CD8-positive, alpha-beta T cell (primary cell): ENCODE measurements at regions of chr12 and their contacts with region 1.

Region 1: DNA sequence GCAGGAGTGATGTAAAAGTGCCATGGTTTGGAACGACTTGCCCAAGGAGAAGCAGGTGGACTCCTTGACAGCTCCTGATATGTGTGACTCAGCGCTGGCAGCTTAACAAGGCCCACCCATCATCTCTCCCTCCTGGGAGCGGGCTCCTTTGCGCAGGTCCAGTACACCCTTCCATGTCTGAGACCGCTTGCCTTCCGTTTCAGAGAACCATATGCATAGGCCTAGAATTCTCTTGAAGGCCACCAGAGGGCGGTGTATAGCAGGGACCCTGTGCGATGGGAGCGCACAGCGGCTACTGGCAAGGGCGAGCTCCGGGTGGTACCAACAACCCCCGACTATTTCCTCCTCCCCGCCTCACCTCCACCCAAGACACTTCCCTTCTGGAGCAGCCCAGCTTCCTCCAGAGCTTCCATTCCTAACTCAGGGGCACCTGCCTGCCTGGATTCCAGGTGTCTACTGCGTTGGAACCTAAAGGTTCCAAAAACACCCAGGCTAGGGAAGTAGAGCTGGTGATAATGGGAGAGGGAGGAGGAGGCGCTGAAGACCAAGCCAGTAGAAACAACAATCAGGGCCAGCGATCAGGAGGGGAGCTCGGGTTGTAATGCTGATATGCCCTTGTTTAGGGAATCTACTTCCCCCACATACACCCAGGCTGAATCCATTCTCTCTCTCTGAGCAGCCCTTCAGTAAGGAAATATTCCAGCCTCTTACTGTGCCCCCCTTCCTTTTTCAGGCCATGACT is 6.2 kb downstream of the DHH start:
- DNase-seq: peak; percentile 19 to 89 (median 70)
- ATAC-seq: peak; percentile 88
- H3K4me3 ChIP-seq: no peak overlapping the region
- H3K4me3 Mint-ChIP-seq: no peak overlapping the region
- H3K27ac ChIP-seq: no peak overlapping the region
- H3K27ac Mint-ChIP-seq: no peak overlapping the region
- H3K4me1 ChIP-seq: peaks cover 45% of the 10 kb centered on the region
- H3K4me1 Mint-ChIP-seq: peaks cover 36% of the 10 kb centered on the region
- H3K27me3 ChIP-seq: peaks cover 45 to 47% of the 10 kb centered on the region in 2 experiments
- H3K27me3 Mint-ChIP-seq: peaks cover 44% of the 10 kb centered on the region
- CTCF ChIP-seq: peak; percentile 79

Region 2: GRCh38 chr12:48861111-48861510 is 227.2 kb before region 1 on chr12:
- CTCF ChIA-PET with region 1: no interaction called
- POLR2A ChIA-PET with region 1: no interaction called
- intact Hi-C with region 1: no loop called
- DNase-seq: no peak
- ATAC-seq: no peak
- H3K4me3 ChIP-seq: no peak overlapping the region
- H3K4me3 Mint-ChIP-seq: no peak overlapping the region
- H3K27ac ChIP-seq: no peak overlapping the region
- H3K27ac Mint-ChIP-seq: no peak overlapping the region
- H3K4me1 ChIP-seq: peaks cover 15% of the 10 kb centered on the region
- H3K4me1 Mint-ChIP-seq: peaks cover 25% of the 10 kb centered on the region
- H3K27me3 ChIP-seq: peaks cover 7 to 16% of the 10 kb centered on the region in 2 experiments
- H3K27me3 Mint-ChIP-seq: peaks cover 31% of the 10 kb centered on the region
- CTCF ChIP-seq: no peak

Region 3: GRCh38 chr12:48995061-48995879 is 93.1 kb before region 1 on chr12:
- CTCF ChIA-PET with region 1: interaction called, 10 read pairs
- POLR2A ChIA-PET with region 1: no interaction called
- intact Hi-C with region 1: loop called (anchors 1 to 5 kb)
- DNase-seq: peak in 6 of 9 experiments; percentile 53 to 70 (median 63)
- ATAC-seq: no peak
- H3K4me3 ChIP-seq: no peak overlapping the region
- H3K4me3 Mint-ChIP-seq: peak overlapping the region; percentile 49
- H3K27ac ChIP-seq: no peak overlapping the region
- H3K27ac Mint-ChIP-seq: no peak overlapping the region
- H3K4me1 ChIP-seq: peaks cover 39% of the 10 kb centered on the region
- H3K4me1 Mint-ChIP-seq: peaks cover 32% of the 10 kb centered on the region
- H3K27me3 ChIP-seq: peaks cover 32 to 41% of the 10 kb centered on the region in 2 experiments
- H3K27me3 Mint-ChIP-seq: peaks cover 53% of the 10 kb centered on the region
- CTCF ChIP-seq: peak; percentile 79

Region 4: DNA sequence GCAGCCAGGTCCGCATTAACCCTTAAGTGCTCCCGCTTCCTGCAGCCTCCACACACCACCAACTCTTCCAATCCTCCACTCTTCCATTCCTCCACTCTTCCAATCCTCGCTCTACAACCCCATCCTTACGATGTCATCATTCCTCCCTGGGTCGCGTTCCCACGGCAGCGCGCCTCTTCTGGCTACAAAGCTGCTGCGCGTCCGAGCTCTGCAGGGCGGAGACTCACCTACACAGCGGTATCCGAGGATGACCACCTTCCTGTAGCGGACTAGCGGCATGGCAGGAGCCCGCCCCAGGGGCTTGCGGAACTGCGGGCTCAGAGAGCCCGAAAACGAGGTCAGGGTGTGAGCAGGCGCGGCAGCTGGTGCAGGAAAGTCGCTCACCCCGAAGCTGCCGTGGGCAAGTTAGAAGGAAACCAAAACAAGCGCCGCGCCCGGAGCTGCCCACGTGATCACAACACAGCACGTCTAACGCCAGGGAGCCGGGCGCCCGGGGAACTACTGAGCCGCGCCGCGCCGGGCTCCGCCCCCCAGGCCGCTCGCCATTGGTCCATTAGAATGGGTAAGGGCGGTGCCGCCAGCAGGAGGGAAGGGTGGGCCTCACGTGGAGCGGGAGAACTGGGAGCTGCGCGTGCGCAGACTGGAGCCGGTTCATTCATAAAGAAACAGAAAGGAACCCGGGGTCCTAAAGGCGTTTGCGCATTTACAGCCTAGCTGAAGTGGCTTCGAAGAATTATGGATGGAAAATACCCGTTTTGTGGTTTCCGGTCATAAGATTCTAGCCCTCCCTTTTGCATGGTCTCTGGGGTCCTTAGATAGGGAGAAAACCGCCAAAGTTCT is 18.6 kb before region 1 on chr12 and contains the start of gene RHEBL1:
- CTCF ChIA-PET with region 1: interaction called, 129 read pairs
- POLR2A ChIA-PET with region 1: interaction called, 6 read pairs
- intact Hi-C with region 1: loop called (anchors 1 to 2 kb)
- DNase-seq: peak; percentile 96 to 99 (median 98)
- ATAC-seq: peak; percentile 99
- H3K4me3 ChIP-seq: peak within 1 kb of the TSS; percentile 79 to 90
- H3K4me3 Mint-ChIP-seq: peak within 1 kb of the TSS; percentile 96
- H3K27ac ChIP-seq: peak within 1 kb of the TSS; percentile 64 to 81
- H3K27ac Mint-ChIP-seq: peak within 1 kb of the TSS; percentile 89
- H3K4me1 ChIP-seq: peaks cover 9% of the 10 kb centered on the region
- H3K4me1 Mint-ChIP-seq: peaks cover 18% of the 10 kb centered on the region
- H3K27me3 ChIP-seq: no peaks in the 10 kb centered on the region
- H3K27me3 Mint-ChIP-seq: no peaks in the 10 kb centered on the region
- CTCF ChIP-seq: no peak
- total RNA-seq, gene RHEBL1: 4.7 to 5.6 TPM

Region 5: GRCh38 chr12:49110464-49111155 is 22.2 kb after region 1 on chr12 and contains the start of gene LMBR1L:
- CTCF ChIA-PET with region 1: interaction called, 56 read pairs
- POLR2A ChIA-PET with region 1: interaction called, 9 read pairs
- intact Hi-C with region 1: loop called in 1 of 2 experiments (anchors 2 kb)
- DNase-seq: peak; percentile 93 to 99 (median 96)
- ATAC-seq: peak; percentile 90
- H3K4me3 ChIP-seq: peak within 1 kb of the TSS; percentile 82 to 92
- H3K4me3 Mint-ChIP-seq: peak within 1 kb of the TSS; percentile 98
- H3K27ac ChIP-seq: peak within 1 kb of the TSS; percentile 92 to 97
- H3K27ac Mint-ChIP-seq: peak within 1 kb of the TSS; percentile 98
- H3K4me1 ChIP-seq: peaks cover 18% of the 10 kb centered on the region
- H3K4me1 Mint-ChIP-seq: peaks cover 44% of the 10 kb centered on the region
- H3K27me3 ChIP-seq: no peaks in the 10 kb centered on the region
- H3K27me3 Mint-ChIP-seq: no peaks in the 10 kb centered on the region
- CTCF ChIP-seq: peak; percentile 53
- total RNA-seq, gene LMBR1L: 464 to 497 TPM

Region 6: GRCh38 chr12:49188914-49189367 is 100.6 kb after region 1 on chr12 and contains the start of gene TUBA1A:
- CTCF ChIA-PET with region 1: interaction called, 23 read pairs
- POLR2A ChIA-PET with region 1: no interaction called
- intact Hi-C with region 1: loop called in 1 of 2 experiments (anchors 1 kb)
- DNase-seq: peak; percentile 90 to 99 (median 96)
- ATAC-seq: peak; percentile 85
- H3K4me3 ChIP-seq: peak within 1 kb of the TSS; percentile 90 to 98
- H3K4me3 Mint-ChIP-seq: peak within 1 kb of the TSS; percentile 97
- H3K27ac ChIP-seq: peak within 1 kb of the TSS; percentile 100
- H3K27ac Mint-ChIP-seq: peak within 1 kb of the TSS; percentile 100
- H3K4me1 ChIP-seq: peaks cover 14% of the 10 kb centered on the region
- H3K4me1 Mint-ChIP-seq: peaks cover 14% of the 10 kb centered on the region
- H3K27me3 ChIP-seq: no peaks in the 10 kb centered on the region
- H3K27me3 Mint-ChIP-seq: no peaks in the 10 kb centered on the region
- CTCF ChIP-seq: no peak
- total RNA-seq, gene TUBA1A: 209 to 225 TPM